Sigmoid colon (tissue), 7 donors: ENCODE measurements at regions of chrX and their contacts with region 1.

Region 1: DNA sequence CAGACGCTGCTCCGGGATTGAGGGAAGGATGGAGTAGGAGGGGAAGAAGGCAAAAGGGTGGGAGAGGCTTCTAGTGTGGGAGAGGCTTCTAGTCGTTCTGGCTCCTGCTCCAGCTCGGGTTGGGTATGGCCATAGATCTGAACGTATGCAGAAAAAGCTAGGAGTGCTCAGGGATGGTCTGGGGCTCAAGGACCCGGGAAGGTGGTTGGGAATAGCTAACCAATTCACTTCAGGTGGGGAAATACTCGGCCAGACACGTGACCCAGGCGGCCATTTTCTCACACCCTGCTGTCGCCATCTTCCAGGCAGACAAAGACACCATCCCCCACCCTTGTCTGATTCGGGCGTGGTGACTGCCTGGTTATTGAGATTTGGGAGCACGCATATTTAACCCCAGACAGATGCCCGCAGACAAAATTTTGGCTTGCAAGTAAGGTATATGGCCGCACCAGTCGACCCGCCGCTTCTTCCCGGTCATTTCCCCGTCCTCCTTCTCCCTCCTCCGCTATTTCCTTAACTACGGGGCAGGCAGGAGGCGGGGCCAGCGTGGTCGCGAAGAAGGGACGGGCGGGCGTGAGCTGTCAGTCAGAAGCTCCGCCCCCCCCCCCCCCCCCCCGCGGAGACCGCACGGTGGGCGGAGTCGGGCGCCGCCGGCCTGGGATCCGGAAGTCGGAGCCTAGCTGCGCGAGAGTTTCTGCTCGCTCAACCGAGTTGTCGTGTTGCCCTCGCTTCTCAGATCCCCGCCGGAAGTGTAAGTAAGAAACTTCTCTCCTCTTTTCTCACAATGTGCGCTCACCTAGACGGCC is at the start of gene GNL3L:
- DNase-seq: peak; percentile 94
- H3K4me3 ChIP-seq: peak within 1 kb of the TSS; percentile 55 to 77 (median 59)
- H3K27ac ChIP-seq: peak within 1 kb of the TSS; percentile 77 to 86 (median 80)
- H3K4me1 ChIP-seq: peaks cover 0 to 16% (median 11%) of the 10 kb centered on the region in 4 donors
- H3K27me3 ChIP-seq: no peaks in the 10 kb centered on the region
- CTCF ChIP-seq: no peak
- EP300 ChIP-seq: no peak
- POLR2A ChIP-seq: no peak
- total RNA-seq, gene GNL3L: 9.9 to 18.3 (median 17.5) TPM

Region 2: DNA sequence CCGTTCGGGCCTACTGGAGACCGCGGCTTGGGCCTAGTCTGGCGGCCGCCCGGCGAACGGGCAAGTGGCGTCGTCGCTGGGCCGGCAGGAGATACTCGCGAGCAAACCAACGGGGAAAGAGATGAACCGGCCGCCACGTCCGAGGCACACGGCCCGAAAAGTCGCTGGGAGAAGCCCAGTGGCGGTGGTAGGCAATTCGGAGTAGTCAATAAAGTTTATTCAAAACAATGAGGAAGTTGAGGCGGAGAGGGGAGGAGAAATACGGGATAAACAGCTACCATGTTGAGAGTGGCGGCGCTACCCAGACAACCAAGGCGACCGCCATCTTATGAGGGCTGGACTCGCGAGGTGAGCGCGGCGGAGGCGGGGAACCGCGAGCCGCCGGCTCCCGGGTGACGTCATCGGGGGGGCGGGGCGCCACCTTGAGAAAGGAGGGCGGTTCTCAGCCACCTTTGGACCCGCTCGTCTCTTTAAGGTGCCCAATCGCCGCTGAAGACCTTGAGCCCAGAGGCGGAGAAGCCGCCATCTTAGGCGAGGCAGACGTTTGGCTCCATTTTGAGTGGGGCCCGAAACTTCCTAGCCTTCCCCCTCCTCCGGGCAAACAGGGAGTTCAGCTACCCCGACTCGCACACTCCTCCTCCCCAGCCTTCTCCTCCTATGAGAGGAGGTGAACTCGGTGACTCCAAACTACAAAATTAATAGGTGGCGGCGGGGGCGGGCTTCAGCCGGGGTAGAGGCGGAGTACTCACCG is 485.5 kb before region 1 on chrX and contains the start of gene PHF8:
- intact Hi-C with region 1: loop called (anchors 10 kb)
- DNase-seq: peak; percentile 97
- H3K4me3 ChIP-seq: peak within 1 kb of the TSS; percentile 62 to 76 (median 68)
- H3K27ac ChIP-seq: peak within 1 kb of the TSS; percentile 91 to 95 (median 93)
- H3K4me1 ChIP-seq: no peaks in the 10 kb centered on the region
- H3K27me3 ChIP-seq: no peaks in the 10 kb centered on the region
- CTCF ChIP-seq: no peak
- EP300 ChIP-seq: no peak
- POLR2A ChIP-seq: peak; percentile 16 to 31
- total RNA-seq, gene PHF8: 15.3 to 44.9 (median 22.1) TPM

Region 3: DNA sequence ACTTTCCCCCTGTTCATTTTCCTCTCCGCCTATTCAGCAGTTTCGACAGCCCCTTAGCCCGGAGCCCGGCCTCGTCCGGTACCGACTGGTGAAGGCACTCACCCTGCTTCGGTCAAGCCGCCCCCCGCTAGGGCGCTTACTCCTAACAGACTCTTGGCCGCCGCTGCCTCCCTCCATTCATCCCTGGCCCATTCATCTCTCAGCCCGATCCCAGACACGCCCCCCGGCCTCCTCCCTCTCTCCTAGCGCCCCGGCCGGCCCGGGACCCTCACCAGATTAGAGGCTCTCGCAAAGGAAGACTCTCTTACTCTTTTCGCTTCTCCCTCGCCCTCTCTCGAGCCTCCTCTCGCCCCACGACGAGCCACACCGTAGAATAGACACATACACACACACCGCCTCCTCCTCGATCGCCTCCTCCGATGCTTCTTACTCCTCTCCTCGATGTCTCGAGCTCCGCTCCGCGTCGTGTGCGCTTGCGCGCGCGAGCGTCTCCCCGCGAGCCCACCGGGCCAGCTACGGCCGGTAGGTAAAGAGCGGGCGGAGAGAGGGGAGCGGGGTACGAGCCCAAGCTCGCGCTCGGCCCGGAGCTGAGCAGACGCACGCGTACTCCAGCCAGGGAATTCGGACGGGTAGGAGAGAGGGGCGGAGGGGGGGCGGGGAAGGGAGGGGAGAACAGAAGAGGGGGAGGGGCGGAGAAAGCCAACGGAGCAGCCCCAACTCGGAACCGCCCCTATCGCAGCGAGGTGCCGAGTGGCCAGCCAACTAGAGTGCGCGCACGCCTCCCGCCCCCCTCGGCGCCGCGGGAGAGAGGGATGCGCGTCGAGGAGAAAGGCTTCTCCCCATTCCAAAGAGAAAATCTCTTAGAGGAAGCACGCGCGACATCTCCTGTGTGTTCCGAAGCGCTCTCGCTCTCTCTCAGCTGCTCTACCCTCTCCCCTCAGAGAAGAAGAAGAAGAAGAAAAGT is 172.1 kb before region 1 on chrX and contains the start of gene WNK3:
- intact Hi-C with region 1: loop called (anchors 2 kb)
- DNase-seq: peak; percentile 92
- H3K4me3 ChIP-seq: peak within 1 kb of the TSS; percentile 34 to 55 (median 52)
- H3K27ac ChIP-seq: peak within 1 kb of the TSS; percentile 68 to 78 (median 70)
- H3K4me1 ChIP-seq: peaks cover 0 to 4% (median 0%) of the 10 kb centered on the region in 4 donors
- H3K27me3 ChIP-seq: no peaks in the 10 kb centered on the region
- CTCF ChIP-seq: no peak
- EP300 ChIP-seq: no peak
- POLR2A ChIP-seq: no peak
- total RNA-seq, gene WNK3: 1.6 to 1.9 (median 1.7) TPM

Region 4: DNA sequence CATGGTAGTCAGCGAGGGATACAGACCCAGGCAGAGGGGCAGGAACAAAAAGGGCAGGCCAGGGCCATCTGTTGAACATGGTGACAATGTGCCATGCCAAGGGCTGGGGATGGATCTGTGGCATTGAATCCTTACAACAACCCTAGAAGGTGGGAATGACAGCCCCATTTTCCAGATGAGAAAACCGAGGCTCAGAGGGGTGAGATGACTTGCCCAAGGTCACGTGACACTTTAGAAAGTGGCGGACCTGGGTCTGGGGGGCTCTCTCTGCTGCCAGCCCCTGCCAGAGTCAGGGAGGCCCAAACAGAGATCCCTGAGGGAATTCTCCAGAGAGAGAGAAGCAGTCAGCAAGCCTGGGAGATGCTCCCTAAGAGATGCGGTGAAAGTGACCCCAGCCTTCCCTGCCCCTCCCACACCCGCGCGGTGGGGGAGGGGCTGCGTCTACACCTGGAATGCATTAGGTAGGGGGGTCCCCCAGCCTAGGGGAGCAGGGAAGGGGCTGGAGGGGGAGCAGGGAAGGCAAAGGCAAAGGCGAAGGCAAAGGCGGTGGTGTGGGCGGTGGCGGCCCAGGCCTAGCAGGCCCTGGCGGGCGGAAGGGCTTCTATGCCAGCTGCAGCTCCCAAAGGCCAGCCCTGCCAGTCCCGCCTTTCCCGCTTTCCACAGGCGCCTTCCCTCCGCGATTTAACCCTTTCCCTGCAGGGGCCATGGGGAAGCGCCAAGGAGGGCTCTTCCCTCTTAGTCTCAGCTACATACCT is 46.7 kb before region 1 on chrX:
- intact Hi-C with region 1: loop called (anchors 5 kb)
- DNase-seq: no peak
- H3K4me3 ChIP-seq: peak overlapping the region in 3 of 4 donors; percentile 31 to 35 (median 34)
- H3K27ac ChIP-seq: peak overlapping the region; percentile 66 to 74 (median 70)
- H3K4me1 ChIP-seq: peaks cover 0 to 29% (median 20%) of the 10 kb centered on the region in 4 donors
- H3K27me3 ChIP-seq: no peaks in the 10 kb centered on the region
- CTCF ChIP-seq: no peak
- EP300 ChIP-seq: no peak
- POLR2A ChIP-seq: no peak

Region 5: DNA sequence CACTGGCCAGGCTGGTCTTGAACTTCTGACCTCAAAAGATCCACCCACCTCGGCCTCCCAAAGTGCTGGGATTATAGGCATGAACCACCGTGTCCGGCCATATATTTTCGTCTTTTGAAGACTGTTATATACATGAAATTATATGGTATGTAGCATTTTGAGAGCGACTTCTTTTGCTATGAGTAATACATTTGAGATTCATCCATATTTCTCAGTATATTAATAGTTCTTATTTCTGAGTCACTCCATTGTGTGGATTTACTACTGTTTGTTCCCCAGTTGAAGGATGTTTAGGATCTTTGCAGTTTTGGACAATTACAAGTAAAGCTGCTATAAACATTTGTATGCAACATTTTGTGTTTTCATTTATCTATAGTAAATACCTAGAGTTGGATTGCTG is 35.2 kb after region 1 on chrX:
- intact Hi-C with region 1: no loop called
- DNase-seq: no peak
- H3K4me3 ChIP-seq: no peak overlapping the region
- H3K27ac ChIP-seq: no peak overlapping the region
- H3K4me1 ChIP-seq: no peaks in the 10 kb centered on the region
- H3K27me3 ChIP-seq: no peaks in the 10 kb centered on the region
- CTCF ChIP-seq: no peak
- EP300 ChIP-seq: no peak
- POLR2A ChIP-seq: no peak

Region 6: DNA sequence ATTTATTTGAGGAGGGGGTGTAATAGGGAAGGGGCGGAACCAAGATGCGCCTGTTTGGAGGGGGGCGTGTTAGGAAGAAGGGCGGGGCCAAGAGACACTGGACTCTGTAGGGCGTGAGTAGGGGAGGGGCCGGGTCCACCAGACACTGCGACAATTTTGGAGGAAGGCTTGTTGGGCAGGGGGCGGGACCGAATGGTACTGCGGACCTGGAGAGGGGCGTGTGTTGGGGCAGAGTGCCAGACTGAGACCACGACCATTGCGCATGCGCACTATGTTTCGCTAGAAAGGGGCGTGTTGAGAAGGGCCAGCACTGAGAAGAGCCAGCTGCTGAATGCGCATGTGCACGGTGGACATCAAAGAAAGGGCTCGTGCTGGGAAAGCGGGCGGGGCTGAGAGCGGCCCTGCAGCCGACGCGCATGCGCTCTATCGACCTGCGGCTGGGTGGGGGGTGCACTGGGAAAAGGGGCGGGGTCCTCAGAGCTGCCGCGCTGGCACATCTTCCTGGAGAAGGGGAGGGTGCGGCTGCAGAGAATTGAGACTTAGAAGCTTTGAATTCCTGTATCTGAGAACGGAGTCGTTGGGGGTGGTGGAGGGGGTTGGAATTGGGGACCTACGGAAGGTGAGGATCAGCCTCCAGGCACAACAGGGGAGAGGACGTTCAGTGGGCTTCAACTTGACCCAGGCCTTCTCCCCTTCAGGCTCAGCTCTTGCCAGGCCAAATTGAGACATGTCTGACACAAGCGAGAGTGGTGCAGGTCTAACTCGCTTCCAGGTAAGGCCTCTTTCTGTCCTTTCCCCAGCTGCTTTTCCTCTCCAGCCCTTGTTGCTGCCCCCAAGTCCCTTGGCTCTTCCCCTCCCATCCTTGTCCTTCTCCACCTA is 279.1 kb after region 1 on chrX:
- intact Hi-C with region 1: loop called (anchors 2 kb)
- DNase-seq: peak; percentile 97
- H3K4me3 ChIP-seq: peak overlapping the region; percentile 55 to 73 (median 70)
- H3K27ac ChIP-seq: peak overlapping the region; percentile 87 to 91 (median 90)
- H3K4me1 ChIP-seq: peaks cover 0 to 15% (median 11%) of the 10 kb centered on the region in 4 donors
- H3K27me3 ChIP-seq: no peaks in the 10 kb centered on the region
- CTCF ChIP-seq: no peak
- EP300 ChIP-seq: peak in 1 of 4 donors; percentile 8
- POLR2A ChIP-seq: no peak

Region 7: GRCh38 chrX:55717521-55718497 is 1188.1 kb after region 1 on chrX and contains the start of gene RRAGB:
- intact Hi-C with region 1: loop called (anchors 5 kb)
- DNase-seq: peak; percentile 97
- H3K4me3 ChIP-seq: peak within 1 kb of the TSS; percentile 49 to 67 (median 62)
- H3K27ac ChIP-seq: peak within 1 kb of the TSS; percentile 81 to 87 (median 84)
- H3K4me1 ChIP-seq: peaks cover 0 to 12% (median 0%) of the 10 kb centered on the region in 4 donors
- H3K27me3 ChIP-seq: no peaks in the 10 kb centered on the region
- CTCF ChIP-seq: peak in 3 of 4 experiments; percentile 45 to 57 (median 47)
- EP300 ChIP-seq: peak in 1 of 4 donors; percentile 26
- POLR2A ChIP-seq: no peak
- total RNA-seq, gene RRAGB: 10.0 to 41.4 (median 24.4) TPM